Activated naive CD4-positive, alpha-beta T cell treated with anti-CD3 and anti-CD28 coated beads for 36 hours (primary cell): ENCODE measurements at regions of chr3 and their contacts with region 1.

Region 1: GRCh38 chr3:182713743-182714517 is 79.4 kb upstream of the ATP11B start:
- DNase-seq: no peak
- H3K4me3 Mint-ChIP-seq: no peak overlapping the region
- H3K27ac Mint-ChIP-seq: no peak overlapping the region
- H3K4me1 Mint-ChIP-seq: peaks cover 8% of the 10 kb centered on the region
- H3K27me3 Mint-ChIP-seq: no peaks in the 10 kb centered on the region

Region 2: GRCh38 chr3:182342252-182342862 is 371.6 kb before region 1 on chr3:
- CTCF ChIA-PET with region 1: no interaction called
- intact Hi-C with region 1: no loop called
- DNase-seq: no peak
- H3K4me3 Mint-ChIP-seq: no peak overlapping the region
- H3K27ac Mint-ChIP-seq: no peak overlapping the region
- H3K4me1 Mint-ChIP-seq: no peaks in the 10 kb centered on the region
- H3K27me3 Mint-ChIP-seq: no peaks in the 10 kb centered on the region

Region 3: GRCh38 chr3:182837855-182838454 is 124.0 kb after region 1 on chr3:
- CTCF ChIA-PET with region 1: interaction called, 13 read pairs
- intact Hi-C with region 1: loop called (anchors 1 kb)
- DNase-seq: no peak
- H3K4me3 Mint-ChIP-seq: no peak overlapping the region
- H3K27ac Mint-ChIP-seq: no peak overlapping the region
- H3K4me1 Mint-ChIP-seq: peaks cover 8% of the 10 kb centered on the region
- H3K27me3 Mint-ChIP-seq: no peaks in the 10 kb centered on the region

Region 4: DNA sequence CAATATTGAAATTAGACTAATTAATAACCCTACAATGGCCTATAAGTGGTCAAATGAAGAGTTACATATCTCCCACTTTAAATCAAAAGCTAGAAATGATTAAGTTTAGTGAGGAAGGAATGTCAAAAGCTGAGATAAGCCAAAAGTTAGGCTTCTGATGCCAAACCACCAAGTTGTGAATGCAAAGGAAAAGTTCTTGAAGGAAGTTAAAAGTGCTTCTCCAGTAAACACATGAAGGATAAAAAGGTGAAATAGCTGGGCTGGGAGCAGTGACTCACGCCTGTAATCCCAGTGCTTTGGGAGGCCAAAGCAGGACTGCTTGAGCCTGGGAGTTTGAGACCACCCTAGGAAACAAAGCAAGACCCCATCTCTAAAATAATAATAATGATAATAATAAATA is 313.3 kb after region 1 on chr3:
- CTCF ChIA-PET with region 1: no interaction called
- intact Hi-C with region 1: loop called (anchors 10 kb)
- DNase-seq: no peak
- H3K4me3 Mint-ChIP-seq: no peak overlapping the region
- H3K27ac Mint-ChIP-seq: no peak overlapping the region
- H3K4me1 Mint-ChIP-seq: no peaks in the 10 kb centered on the region
- H3K27me3 Mint-ChIP-seq: no peaks in the 10 kb centered on the region

Region 5: GRCh38 chr3:183178629-183179549 is 465.0 kb after region 1 on chr3:
- CTCF ChIA-PET with region 1: no interaction called
- intact Hi-C with region 1: loop called (anchors 1 kb)
- DNase-seq: peak; percentile 84
- H3K4me3 Mint-ChIP-seq: peak overlapping the region; percentile 76
- H3K27ac Mint-ChIP-seq: no peak overlapping the region
- H3K4me1 Mint-ChIP-seq: peaks cover 11% of the 10 kb centered on the region
- H3K27me3 Mint-ChIP-seq: peaks cover 30% of the 10 kb centered on the region

Region 6: GRCh38 chr3:183385698-183386613 is 672.0 kb after region 1 on chr3:
- CTCF ChIA-PET with region 1: no interaction called
- intact Hi-C with region 1: loop called (anchors 1 kb)
- DNase-seq: peak; percentile 79
- H3K4me3 Mint-ChIP-seq: no peak overlapping the region
- H3K27ac Mint-ChIP-seq: no peak overlapping the region
- H3K4me1 Mint-ChIP-seq: peaks cover 9% of the 10 kb centered on the region
- H3K27me3 Mint-ChIP-seq: no peaks in the 10 kb centered on the region